Naive thymus-derived CD4-positive, alpha-beta T cell (primary cell): ENCODE measurements at regions of chr2 and their contacts with region 1.

Region 1: GRCh38 chr2:68062680-68063387 is at the start of gene C1D:
- DNase-seq: peak; percentile 87 to 93 (median 91)
- ATAC-seq: peak; percentile 99
- H3K4me3 ChIP-seq: peak within 1 kb of the TSS; percentile 94
- H3K4me3 Mint-ChIP-seq: peak within 1 kb of the TSS; percentile 84 to 98 (median 96)
- H3K27ac ChIP-seq: peak within 1 kb of the TSS; percentile 97
- H3K27ac Mint-ChIP-seq: peak within 1 kb of the TSS; percentile 94 to 99 (median 98)
- H3K4me1 ChIP-seq: peaks cover 11 to 12% of the 10 kb centered on the region in 2 donors
- H3K4me1 Mint-ChIP-seq: peaks cover 16 to 53% (median 44%) of the 10 kb centered on the region in 7 donors
- H3K27me3 ChIP-seq: no peaks in the 10 kb centered on the region
- H3K27me3 Mint-ChIP-seq: peaks cover 0 to 24% (median 5%) of the 10 kb centered on the region in 5 donors
- total RNA-seq, gene C1D: 13.2 to 24.4 (median 15.7) TPM

Region 2: DNA sequence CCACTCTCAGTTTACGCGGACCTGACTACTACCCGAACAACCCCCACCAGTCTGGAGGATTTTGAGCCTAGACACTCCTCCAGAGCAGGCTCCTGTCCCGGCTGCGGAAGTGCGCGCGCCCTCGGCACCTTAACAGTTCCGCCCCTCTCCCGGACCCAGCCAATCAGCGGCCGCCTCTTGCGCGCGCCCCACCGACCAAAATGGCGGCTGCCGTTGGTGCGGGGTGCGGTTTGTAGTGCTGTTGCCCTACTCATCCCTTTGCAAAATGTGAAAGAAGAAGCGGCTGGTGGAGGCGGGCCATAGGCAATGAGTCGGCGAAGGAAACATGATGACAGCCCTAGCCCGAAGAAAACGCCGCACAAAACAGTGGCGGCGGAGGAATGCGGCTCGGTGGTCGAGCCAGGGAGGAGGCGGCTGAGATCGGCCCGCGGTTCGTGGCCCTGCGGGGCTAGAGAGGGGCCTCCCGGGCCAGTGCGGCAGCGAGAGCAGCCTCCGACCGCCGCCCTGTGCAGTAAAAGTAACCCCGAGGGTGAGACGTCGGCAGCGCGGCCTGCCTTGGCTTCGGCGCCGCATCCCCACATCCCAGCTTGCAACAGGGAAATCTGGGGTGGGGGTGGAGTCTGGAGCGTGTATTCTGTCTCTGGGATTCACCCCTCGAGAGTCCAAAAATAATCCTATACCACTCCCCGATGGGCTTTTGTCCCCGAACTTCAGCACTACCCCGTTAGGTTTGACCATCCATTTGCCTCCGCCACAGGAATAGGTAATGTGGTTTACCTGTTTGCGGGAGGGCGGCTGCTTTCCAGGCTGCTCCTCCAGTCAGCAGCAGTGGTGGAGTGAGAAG is 665.5 kb before region 1 on chr2 and contains the start of gene ETAA1:
- CTCF ChIA-PET with region 1: no interaction called
- POLR2A ChIA-PET with region 1: no interaction called
- intact Hi-C with region 1: loop called (anchors 1 to 2 kb)
- DNase-seq: peak; percentile 90 to 94 (median 92)
- ATAC-seq: peak; percentile 99
- H3K4me3 ChIP-seq: peak within 1 kb of the TSS; percentile 98
- H3K4me3 Mint-ChIP-seq: peak within 1 kb of the TSS; percentile 92 to 99 (median 97)
- H3K27ac ChIP-seq: peak within 1 kb of the TSS; percentile 87
- H3K27ac Mint-ChIP-seq: peak within 1 kb of the TSS; percentile 97 to 99 (median 98)
- H3K4me1 ChIP-seq: no peaks in the 10 kb centered on the region
- H3K4me1 Mint-ChIP-seq: peaks cover 9 to 26% (median 18%) of the 10 kb centered on the region in 7 donors
- H3K27me3 ChIP-seq: no peaks in the 10 kb centered on the region
- H3K27me3 Mint-ChIP-seq: no peaks in the 10 kb centered on the region
- total RNA-seq, gene ETAA1: 6.6 to 16.4 (median 10.0) TPM

Region 3: DNA sequence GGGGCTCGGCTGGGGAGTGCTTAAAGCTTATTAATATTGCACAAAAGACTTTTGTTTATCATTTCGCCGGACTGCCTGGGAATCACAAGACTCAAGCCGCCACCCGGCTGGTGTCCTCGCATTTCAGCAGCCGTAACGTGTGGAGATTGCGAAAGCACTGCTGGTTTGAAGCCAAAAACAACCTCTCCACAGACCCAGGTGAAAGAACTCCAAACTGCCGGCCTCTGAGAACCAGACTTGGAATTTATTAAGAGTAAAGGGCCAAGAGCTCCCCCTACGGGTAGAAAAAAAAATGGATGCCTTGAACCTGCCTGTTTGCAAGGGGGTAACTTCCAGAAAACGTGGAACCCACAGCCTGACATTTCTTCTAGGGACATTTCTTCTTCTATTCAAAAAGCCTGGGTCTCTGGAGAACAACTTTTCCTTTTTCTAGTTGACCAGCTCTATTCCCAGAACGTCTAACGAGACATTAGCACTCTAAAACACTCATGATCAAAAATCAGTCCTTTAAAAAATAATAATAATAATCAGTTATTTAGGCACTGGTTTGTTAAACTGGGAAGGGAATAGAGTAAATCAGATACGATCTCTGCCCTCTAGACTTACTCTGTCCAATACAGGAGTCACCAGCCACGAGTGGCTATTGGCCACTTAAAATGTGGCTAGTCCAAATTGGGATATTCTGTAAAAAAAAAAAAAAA is 216.3 kb before region 1 on chr2:
- CTCF ChIA-PET with region 1: no interaction called
- POLR2A ChIA-PET with region 1: no interaction called
- intact Hi-C with region 1: no loop called
- DNase-seq: peak in 4 of 9 donors; percentile 2 to 21 (median 7)
- ATAC-seq: no peak
- H3K4me3 ChIP-seq: no peak overlapping the region
- H3K4me3 Mint-ChIP-seq: no peak overlapping the region
- H3K27ac ChIP-seq: no peak overlapping the region
- H3K27ac Mint-ChIP-seq: no peak overlapping the region
- H3K4me1 ChIP-seq: no peaks in the 10 kb centered on the region
- H3K4me1 Mint-ChIP-seq: no peaks in the 10 kb centered on the region
- H3K27me3 ChIP-seq: peaks cover 0 to 5% of the 10 kb centered on the region in 2 donors
- H3K27me3 Mint-ChIP-seq: peaks cover 6 to 47% (median 35%) of the 10 kb centered on the region in 5 donors

Region 4: GRCh38 chr2:68110102-68110501 is 47.3 kb after region 1 on chr2:
- CTCF ChIA-PET with region 1: no interaction called
- POLR2A ChIA-PET with region 1: no interaction called
- intact Hi-C with region 1: no loop called
- DNase-seq: peak in 1 of 9 donors; percentile 0
- ATAC-seq: peak; percentile 38
- H3K4me3 ChIP-seq: no peak overlapping the region
- H3K4me3 Mint-ChIP-seq: no peak overlapping the region
- H3K27ac ChIP-seq: no peak overlapping the region
- H3K27ac Mint-ChIP-seq: no peak overlapping the region
- H3K4me1 ChIP-seq: no peaks in the 10 kb centered on the region
- H3K4me1 Mint-ChIP-seq: no peaks in the 10 kb centered on the region
- H3K27me3 ChIP-seq: no peaks in the 10 kb centered on the region
- H3K27me3 Mint-ChIP-seq: peaks cover 0 to 4% (median 0%) of the 10 kb centered on the region in 5 donors